ENCODE measurements at regions of chr4 and their contacts with region 1.

Region 1: DNA sequence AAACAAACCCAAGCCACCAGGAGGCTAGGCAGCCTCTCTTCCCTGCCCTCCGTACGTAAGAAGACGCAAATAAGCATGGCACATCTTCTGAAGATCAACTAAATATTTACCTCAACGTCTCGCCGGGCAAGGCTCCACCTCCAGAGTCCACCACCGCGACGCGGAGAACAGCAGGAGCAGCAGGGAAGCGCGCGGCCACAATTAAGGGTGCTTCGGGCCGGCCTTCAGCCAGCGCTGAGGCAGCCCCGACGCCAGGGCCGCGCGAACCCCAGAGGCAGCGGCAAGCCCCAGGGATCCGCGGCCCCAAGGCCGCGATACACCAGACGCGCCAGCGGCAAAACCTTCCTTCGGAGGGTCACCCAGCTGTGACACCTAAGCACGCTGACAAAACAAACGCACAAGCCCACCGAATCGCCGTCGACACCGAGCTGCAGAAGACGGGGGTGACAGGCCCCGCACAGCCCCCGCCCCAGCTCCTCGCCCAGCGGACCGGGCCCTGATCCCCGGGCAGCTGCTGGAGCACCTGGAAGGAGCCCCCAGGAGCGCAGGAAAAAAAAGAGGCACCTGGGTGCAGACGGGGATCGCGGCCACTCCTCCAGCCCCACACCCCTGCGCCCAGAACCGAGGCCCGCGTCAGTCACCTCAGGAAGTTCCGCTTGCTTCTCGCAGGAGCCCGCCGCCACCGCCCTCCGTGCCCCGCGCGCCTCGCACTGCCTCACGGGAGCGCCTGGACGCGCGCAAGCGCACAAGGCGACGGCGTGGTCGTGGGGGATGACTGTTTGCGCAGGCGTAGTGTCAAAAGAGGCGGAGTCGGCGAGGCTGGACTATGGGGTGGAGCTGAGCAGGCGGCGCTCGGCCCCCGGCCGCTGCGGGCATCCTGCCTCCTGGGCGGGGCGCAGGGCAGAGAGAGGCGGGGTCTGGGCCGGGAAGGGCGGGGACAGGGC is at the starts of genes HAUS3 and POLN:
- DNase-seq: peak; percentile 96 to 100 (median 99)
- ATAC-seq: peak; percentile 97
- H3K4me3 ChIP-seq: peak within 1 kb of the TSS; percentile 93
- H3K4me3 Mint-ChIP-seq: peak within 1 kb of the TSS; percentile 80 to 95 (median 91)
- H3K27ac ChIP-seq: peak within 1 kb of the TSS; percentile 89
- H3K27ac Mint-ChIP-seq: peak within 1 kb of the TSS; percentile 83 to 95 (median 90)
- H3K4me1 ChIP-seq: peaks cover 37 to 38% of the 10 kb centered on the region in 2 donors
- H3K4me1 Mint-ChIP-seq: peaks cover 48 to 65% (median 60%) of the 10 kb centered on the region in 7 donors
- H3K27me3 ChIP-seq: no peaks in the 10 kb centered on the region
- H3K27me3 Mint-ChIP-seq: peaks cover 0 to 6% (median 0%) of the 10 kb centered on the region in 5 donors
- total RNA-seq, gene HAUS3: 24.4 to 88.2 (median 34.1) TPM
- total RNA-seq, gene POLN: 2.4 to 5.4 (median 3.2) TPM

Region 2: GRCh38 chr4:244471-244870 is 1997.2 kb before region 1 on chr4:
- CTCF ChIA-PET with region 1: no interaction called
- POLR2A ChIA-PET with region 1: no interaction called
- intact Hi-C with region 1: no loop called
- DNase-seq: peak in 8 of 9 donors; percentile 11 to 66 (median 47)
- ATAC-seq: no peak
- H3K4me3 ChIP-seq: no peak overlapping the region
- H3K4me3 Mint-ChIP-seq: no peak overlapping the region
- H3K27ac ChIP-seq: no peak overlapping the region
- H3K27ac Mint-ChIP-seq: no peak overlapping the region
- H3K4me1 ChIP-seq: no peaks in the 10 kb centered on the region
- H3K4me1 Mint-ChIP-seq: peaks cover 9 to 13% (median 11%) of the 10 kb centered on the region in 7 donors
- H3K27me3 ChIP-seq: no peaks in the 10 kb centered on the region
- H3K27me3 Mint-ChIP-seq: no peaks in the 10 kb centered on the region

Region 3: DNA sequence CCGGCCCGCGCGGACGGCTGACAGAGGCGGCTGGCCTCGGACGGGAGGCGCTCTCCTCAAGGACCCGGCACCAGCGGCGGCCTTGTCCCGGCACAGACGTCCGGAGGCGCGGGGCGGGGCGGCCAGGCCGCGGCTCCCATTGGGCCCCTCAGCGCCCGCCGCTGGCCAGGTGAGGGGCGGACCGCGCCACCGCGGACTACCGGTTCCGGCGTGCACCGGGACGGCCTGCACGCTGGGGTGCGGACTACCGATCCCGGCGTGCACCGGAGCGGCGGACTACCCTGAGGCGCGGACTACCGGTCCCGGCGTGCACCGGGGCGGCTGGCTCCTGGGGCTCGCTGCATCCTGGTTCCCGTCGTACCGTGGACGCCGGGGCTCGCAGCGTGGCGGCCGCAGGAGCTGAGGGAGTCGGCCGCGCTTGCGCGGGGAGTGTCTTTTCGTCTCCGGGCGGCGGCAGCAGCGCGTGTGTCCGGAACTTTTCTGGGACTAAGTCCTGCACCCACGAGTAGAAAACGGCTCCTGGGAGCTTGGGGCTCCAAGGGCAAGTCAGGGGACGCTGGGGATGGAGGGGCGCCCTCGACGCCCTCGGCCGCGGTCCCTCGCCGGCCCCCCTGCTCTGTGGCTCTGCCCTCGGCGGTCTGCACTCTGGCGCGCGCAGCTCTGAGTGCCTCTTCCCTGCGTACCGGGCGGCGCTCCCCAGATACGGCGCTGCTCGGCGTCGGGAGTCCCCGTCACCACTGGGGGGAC is 385.5 kb before region 1 on chr4 and contains the start of gene LETM1:
- CTCF ChIA-PET with region 1: no interaction called
- POLR2A ChIA-PET with region 1: no interaction called
- intact Hi-C with region 1: loop called in 1 of 2 experiments (anchors 1 kb)
- DNase-seq: peak; percentile 79 to 96 (median 88)
- ATAC-seq: peak; percentile 98
- H3K4me3 ChIP-seq: peak within 1 kb of the TSS; percentile 86
- H3K4me3 Mint-ChIP-seq: peak within 1 kb of the TSS; percentile 67 to 88 (median 83)
- H3K27ac ChIP-seq: peak within 1 kb of the TSS; percentile 70
- H3K27ac Mint-ChIP-seq: peak within 1 kb of the TSS in 8 of 9 donors; percentile 17 to 80 (median 48)
- H3K4me1 ChIP-seq: peaks cover 10 to 14% of the 10 kb centered on the region in 2 donors
- H3K4me1 Mint-ChIP-seq: peaks cover 31 to 45% (median 41%) of the 10 kb centered on the region in 7 donors
- H3K27me3 ChIP-seq: no peaks in the 10 kb centered on the region
- H3K27me3 Mint-ChIP-seq: no peaks in the 10 kb centered on the region
- total RNA-seq, gene LETM1: 29.5 to 56.4 (median 36.0) TPM

Region 4: DNA sequence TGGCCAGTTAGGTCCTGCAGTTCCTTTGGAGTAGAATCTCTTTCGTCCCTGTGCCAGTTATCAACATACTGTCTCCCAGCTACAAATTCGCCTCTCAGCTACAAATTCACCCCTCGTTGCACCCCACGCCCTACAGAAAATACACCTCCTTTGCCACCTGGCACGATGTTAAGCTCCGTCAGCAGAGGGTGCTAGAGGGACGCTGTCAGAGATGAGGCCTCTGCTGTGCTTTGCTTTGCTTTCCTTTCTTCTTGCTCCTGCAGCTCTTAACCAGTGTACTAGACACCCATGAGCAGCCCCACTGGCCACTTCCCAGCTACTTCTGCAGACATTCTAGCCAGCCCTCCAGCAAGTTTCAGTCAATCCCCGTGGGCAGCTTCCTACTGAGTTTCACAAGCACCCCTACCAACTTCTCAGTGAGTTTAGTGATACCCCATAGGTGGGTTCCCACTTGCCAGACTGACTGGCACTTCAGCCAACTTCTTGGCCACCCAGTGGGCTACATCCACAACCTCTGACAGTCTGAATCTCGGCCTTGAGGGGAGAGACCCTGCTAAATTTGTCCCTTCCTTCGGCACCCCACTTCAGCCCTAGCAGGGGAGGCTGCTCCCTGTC is 21.6 kb before region 1 on chr4:
- CTCF ChIA-PET with region 1: interaction called, 6 read pairs
- POLR2A ChIA-PET with region 1: interaction called, 4 read pairs
- intact Hi-C with region 1: loop called in 1 of 2 experiments (anchors 1 kb)
- DNase-seq: peak; percentile 61 to 84 (median 76)
- ATAC-seq: peak; percentile 96
- H3K4me3 ChIP-seq: no peak overlapping the region
- H3K4me3 Mint-ChIP-seq: no peak overlapping the region
- H3K27ac ChIP-seq: no peak overlapping the region
- H3K27ac Mint-ChIP-seq: peak overlapping the region in 2 of 9 donors; percentile 6 to 29
- H3K4me1 ChIP-seq: peaks cover 0 to 7% of the 10 kb centered on the region in 2 donors
- H3K4me1 Mint-ChIP-seq: peaks cover 0 to 17% (median 6%) of the 10 kb centered on the region in 7 donors
- H3K27me3 ChIP-seq: no peaks in the 10 kb centered on the region
- H3K27me3 Mint-ChIP-seq: no peaks in the 10 kb centered on the region

Region 5: DNA sequence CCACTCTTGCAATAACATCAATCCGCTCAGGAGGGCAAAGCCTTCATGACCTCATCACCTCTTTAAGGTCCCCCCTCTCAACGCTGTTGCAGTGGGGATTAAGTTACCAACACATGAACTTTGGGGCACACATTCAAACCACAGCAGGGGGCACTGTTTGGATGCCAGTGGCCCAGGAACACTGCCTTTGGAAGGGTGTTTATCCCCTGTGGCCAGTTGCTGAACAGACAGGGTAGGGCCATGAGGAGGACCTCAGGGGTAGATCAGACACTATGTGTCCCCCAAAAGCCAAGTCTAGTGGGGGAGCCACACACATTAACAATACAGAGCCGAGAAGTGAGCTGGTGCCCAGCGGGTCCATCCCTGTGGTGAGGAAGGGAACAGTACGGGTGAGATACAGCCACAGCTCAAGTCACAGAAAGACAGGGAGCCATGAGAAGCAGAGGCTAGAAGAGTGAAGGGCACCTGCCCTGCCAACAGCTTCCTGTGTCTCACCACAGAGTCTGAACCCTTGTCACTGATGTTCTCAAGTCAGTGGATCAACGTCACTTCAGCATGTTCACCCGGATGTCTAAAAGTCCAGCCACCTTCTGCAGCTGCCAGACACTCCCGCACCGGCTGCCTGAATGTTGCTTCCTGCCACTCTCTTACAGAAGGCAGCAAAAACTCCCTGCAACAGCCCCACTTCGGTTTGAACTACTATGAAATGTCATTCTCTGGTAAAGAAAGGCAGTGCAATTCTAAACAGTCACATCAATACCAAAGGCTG is 40.1 kb after region 1 on chr4:
- CTCF ChIA-PET with region 1: interaction called, 3 read pairs
- POLR2A ChIA-PET with region 1: interaction called, 4 read pairs
- intact Hi-C with region 1: loop called (anchors 1 kb)
- DNase-seq: peak; percentile 51 to 96 (median 94)
- ATAC-seq: peak; percentile 95
- H3K4me3 ChIP-seq: peak overlapping the region; percentile 33
- H3K4me3 Mint-ChIP-seq: peak overlapping the region; percentile 73 to 90 (median 84)
- H3K27ac ChIP-seq: peak overlapping the region; percentile 81
- H3K27ac Mint-ChIP-seq: peak overlapping the region; percentile 91 to 100 (median 99)
- H3K4me1 ChIP-seq: peaks cover 31 to 34% of the 10 kb centered on the region in 2 donors
- H3K4me1 Mint-ChIP-seq: peaks cover 27 to 64% (median 50%) of the 10 kb centered on the region in 7 donors
- H3K27me3 ChIP-seq: no peaks in the 10 kb centered on the region
- H3K27me3 Mint-ChIP-seq: no peaks in the 10 kb centered on the region

Region 6: GRCh38 chr4:2354118-2354517 is 112.4 kb after region 1 on chr4:
- CTCF ChIA-PET with region 1: interaction called, 3 read pairs
- POLR2A ChIA-PET with region 1: no interaction called
- intact Hi-C with region 1: loop called in 1 of 2 experiments (anchors 5 kb)
- DNase-seq: peak in 5 of 9 donors; percentile 25 to 51 (median 44)
- ATAC-seq: peak; percentile 61
- H3K4me3 ChIP-seq: no peak overlapping the region
- H3K4me3 Mint-ChIP-seq: no peak overlapping the region
- H3K27ac ChIP-seq: no peak overlapping the region
- H3K27ac Mint-ChIP-seq: no peak overlapping the region
- H3K4me1 ChIP-seq: no peaks in the 10 kb centered on the region
- H3K4me1 Mint-ChIP-seq: peaks cover 0 to 11% (median 6%) of the 10 kb centered on the region in 7 donors
- H3K27me3 ChIP-seq: no peaks in the 10 kb centered on the region
- H3K27me3 Mint-ChIP-seq: no peaks in the 10 kb centered on the region

Region 7: DNA sequence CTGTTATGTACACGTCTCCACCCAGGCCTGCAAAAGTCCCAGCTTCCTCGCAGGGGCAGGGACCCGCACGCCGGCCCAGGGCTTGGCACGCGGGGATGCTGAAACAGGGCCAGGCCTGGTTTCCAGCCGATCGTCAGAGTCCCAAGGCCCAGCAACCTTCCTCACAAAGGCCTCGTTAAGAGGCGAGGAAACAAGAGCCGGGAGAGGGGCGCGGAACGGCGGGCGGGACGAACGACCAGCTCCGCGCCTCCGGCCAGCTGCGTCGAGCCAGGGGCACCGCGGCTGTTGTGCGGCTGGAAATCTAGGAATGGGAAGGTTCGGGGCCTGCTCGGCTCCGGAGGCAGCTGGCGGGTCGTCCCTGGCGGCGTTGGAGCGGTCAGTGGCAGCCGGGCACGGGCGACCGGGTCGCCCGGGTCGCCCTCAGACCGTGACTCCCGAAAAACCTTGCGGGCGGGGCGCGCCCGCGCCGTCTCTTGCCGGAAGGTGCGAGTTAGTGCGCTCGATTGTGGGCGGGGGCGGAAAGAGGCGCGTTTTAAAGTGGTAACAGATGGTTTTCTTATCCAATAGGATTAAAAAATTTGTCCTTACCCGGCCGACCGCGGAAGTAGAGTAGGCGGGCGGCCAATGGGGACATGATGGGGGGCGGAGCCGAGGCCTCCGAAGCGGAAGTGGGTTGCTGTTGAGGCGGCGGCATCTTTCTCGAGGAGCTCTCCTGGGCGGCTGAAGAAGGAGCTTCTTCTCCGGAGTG is 226.9 kb after region 1 on chr4 and contains the start of gene RNF4:
- CTCF ChIA-PET with region 1: no interaction called
- POLR2A ChIA-PET with region 1: interaction called, 7 read pairs
- intact Hi-C with region 1: loop called (anchors 1 kb)
- DNase-seq: peak; percentile 77 to 97 (median 96)
- ATAC-seq: peak; percentile 93
- H3K4me3 ChIP-seq: peak within 1 kb of the TSS; percentile 70
- H3K4me3 Mint-ChIP-seq: peak within 1 kb of the TSS; percentile 90 to 98 (median 95)
- H3K27ac ChIP-seq: peak within 1 kb of the TSS; percentile 94
- H3K27ac Mint-ChIP-seq: peak within 1 kb of the TSS; percentile 95 to 98 (median 98)
- H3K4me1 ChIP-seq: peaks cover 31 to 37% of the 10 kb centered on the region in 2 donors
- H3K4me1 Mint-ChIP-seq: peaks cover 40 to 66% (median 53%) of the 10 kb centered on the region in 7 donors
- H3K27me3 ChIP-seq: no peaks in the 10 kb centered on the region
- H3K27me3 Mint-ChIP-seq: peaks cover 0 to 6% (median 0%) of the 10 kb centered on the region in 5 donors
- total RNA-seq, gene RNF4: 80.7 to 101 (median 91.8) TPM

Region 8: DNA sequence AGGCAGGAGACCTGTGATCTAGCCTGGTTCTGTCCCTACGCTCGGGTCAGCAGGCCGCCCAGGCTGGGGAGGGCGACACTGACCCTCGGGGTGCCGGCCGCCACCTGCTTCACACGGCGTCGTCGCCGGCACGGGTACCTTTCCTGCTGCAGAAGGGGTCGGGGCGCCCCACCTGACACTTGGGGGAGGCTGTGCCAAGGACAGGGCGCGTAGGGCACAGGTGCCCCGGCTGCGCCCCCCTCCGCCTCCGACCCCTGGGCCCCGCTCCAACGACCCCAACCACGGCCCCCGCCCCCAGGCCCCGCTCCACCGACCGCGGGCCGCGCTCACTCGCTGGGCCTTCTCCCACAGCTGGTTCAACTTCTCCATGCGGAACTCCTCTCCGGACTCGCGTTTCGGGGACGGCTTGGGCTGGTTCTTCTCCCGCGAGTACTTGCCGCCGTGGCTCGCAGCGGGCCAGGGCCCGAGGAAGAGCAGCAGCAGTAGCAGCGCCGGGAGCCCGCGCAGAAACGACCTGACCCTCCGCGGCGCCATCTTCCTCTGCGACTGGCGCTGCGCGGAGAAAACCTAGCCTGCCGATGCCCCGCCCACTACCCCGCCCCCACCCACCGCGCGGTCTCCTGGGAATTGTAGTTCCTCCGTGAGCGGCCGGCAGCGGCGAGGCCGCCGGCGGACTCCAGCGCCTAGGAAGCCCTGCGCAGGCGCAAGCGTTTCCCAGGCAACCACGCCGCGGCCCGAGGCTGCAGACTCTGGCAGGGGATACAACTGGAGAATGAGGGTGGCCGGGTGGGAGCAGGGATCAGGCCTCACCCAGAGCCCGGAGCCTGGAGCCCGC is 1290.4 kb after region 1 on chr4 and contains the start of gene LRPAP1:
- CTCF ChIA-PET with region 1: no interaction called
- POLR2A ChIA-PET with region 1: no interaction called
- intact Hi-C with region 1: loop called in 1 of 2 experiments (anchors 1 kb)
- DNase-seq: peak; percentile 69 to 92 (median 78)
- ATAC-seq: peak; percentile 96
- H3K4me3 ChIP-seq: peak within 1 kb of the TSS; percentile 83
- H3K4me3 Mint-ChIP-seq: peak within 1 kb of the TSS; percentile 95 to 100 (median 99)
- H3K27ac ChIP-seq: peak within 1 kb of the TSS; percentile 84
- H3K27ac Mint-ChIP-seq: peak within 1 kb of the TSS; percentile 91 to 99 (median 95)
- H3K4me1 ChIP-seq: peaks cover 16 to 32% of the 10 kb centered on the region in 2 donors
- H3K4me1 Mint-ChIP-seq: peaks cover 18 to 50% (median 39%) of the 10 kb centered on the region in 7 donors
- H3K27me3 ChIP-seq: no peaks in the 10 kb centered on the region
- H3K27me3 Mint-ChIP-seq: peaks cover 5 to 10% (median 6%) of the 10 kb centered on the region in 5 donors
- total RNA-seq, gene LRPAP1: 65.2 to 88.6 (median 79.4) TPM

Measured in naive thymus-derived CD4-positive, alpha-beta T cell (primary cell).